ENCODE measurements at regions of chr11 and their contacts with region 1.

Region 1: GRCh38 chr11:17730608-17731462 is 3.7 kb upstream of the KCNC1 start:
- DNase-seq: peak; percentile 75
- ATAC-seq: peak; percentile 91
- H3K4me3 ChIP-seq: no peak overlapping the region
- H3K27ac ChIP-seq: no peak overlapping the region
- H3K4me1 ChIP-seq: peaks cover 0 to 8% of the 10 kb centered on the region in 2 experiments; a peak in 3 of 4 replicates
- H3K27me3 ChIP-seq: no peaks in the 10 kb centered on the region
- CTCF ChIP-seq: peak; percentile 69 to 91 (median 91)
- POLR2A ChIP-seq: no peak
- RAD21 ChIP-seq: peak; percentile 96

Region 2: DNA sequence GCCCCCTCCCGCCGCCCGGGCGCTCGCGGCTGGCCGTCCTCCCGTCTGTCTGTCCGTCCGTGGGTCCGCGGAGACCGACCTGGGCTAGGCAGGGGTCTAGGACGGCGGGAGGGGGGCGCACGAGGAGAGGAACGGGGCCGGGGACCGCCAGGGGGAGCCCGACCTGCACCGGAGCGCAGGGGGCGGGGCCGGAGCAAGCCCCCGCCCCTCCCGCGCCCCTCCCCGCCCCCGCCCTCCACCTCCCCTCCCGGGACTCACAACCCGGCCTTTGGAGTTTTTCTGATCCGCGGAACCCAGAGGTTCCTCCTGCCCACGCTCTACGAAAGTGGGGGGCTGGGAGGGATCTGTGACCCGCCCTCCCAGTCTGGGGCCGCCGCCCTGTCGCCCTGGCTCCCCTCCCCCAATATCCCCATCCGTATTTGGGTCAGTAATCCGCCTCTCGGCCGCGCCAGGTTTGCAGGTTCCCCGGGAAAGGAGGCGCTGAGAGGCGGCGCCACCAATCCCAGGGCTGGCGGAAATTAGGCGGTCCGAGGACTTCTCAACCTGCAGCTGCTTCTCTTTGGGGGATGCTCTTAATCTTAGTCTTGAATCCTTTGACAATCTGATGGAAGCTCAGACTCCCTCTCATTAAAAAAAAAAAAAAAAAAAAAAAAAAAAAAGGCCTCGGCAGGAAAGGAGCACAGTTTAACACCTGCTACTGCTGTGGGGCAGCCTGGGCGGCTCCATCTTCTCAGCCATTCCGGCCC is 341.5 kb before region 1 on chr11:
- CTCF ChIA-PET with region 1: interaction called, 4 read pairs
- POLR2A ChIA-PET with region 1: no interaction called
- RAD21 ChIA-PET with region 1: no interaction called
- intact Hi-C with region 1: loop called (anchors 5 kb)
- DNase-seq: peak; percentile 69
- ATAC-seq: peak; percentile 78
- H3K4me3 ChIP-seq: peak overlapping the region; percentile 58 to 63
- H3K27ac ChIP-seq: peak overlapping the region; percentile 46; the same call in 1 of the 2 replicates
- H3K4me1 ChIP-seq: peaks cover 0 to 19% of the 10 kb centered on the region in 2 experiments; a peak in 3 of 4 replicates
- H3K27me3 ChIP-seq: no peaks in the 10 kb centered on the region
- CTCF ChIP-seq: peak; percentile 35 to 56 (median 50)
- POLR2A ChIP-seq: no peak
- RAD21 ChIP-seq: no peak

Region 3: DNA sequence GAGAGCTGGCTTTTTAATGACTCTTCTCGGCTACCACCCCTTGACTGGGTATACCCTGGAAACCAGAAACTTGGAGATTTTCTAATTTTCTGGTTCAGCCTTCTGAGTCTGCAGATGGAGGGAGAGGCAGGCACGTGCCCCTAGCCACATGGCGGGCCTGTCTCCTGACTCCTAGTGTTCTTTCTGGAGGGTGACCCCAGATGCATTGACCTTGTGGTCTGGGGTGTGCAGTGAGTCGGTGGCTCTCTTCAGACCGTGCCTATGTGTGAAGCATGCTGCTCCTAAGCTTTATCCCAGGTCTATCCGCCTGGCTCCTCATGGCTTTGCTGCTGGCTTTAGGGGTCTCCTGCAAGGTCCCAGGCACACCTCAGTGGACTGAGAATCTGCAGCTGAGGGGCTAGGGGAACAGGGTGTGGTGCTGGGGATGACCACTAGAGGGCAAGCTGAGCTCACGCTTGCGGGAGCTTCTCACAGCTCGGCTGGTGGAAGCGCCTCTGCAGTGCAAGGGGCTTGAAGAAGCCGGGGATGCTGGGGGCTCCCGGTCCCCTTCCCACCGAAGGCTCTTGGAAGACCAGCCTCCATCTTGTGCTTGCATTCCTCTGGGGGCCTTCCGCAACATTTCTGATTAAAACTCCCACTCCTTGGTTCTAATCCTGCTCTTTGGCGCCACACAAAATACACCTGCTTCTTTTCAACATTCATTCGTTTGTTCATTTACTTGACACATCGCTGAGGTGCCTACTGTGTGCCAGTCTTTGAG is 132.0 kb before region 1 on chr11:
- CTCF ChIA-PET with region 1: interaction called, 133 read pairs
- POLR2A ChIA-PET with region 1: no interaction called
- RAD21 ChIA-PET with region 1: interaction called, 22 to 23 read pairs
- intact Hi-C with region 1: loop called (anchors 1 kb)
- DNase-seq: peak; percentile 24
- ATAC-seq: peak; percentile 97
- H3K4me3 ChIP-seq: no peak overlapping the region
- H3K27ac ChIP-seq: no peak overlapping the region
- H3K4me1 ChIP-seq: peaks cover 0 to 7% of the 10 kb centered on the region in 2 experiments; a peak in 2 of 4 replicates
- H3K27me3 ChIP-seq: no peaks in the 10 kb centered on the region
- CTCF ChIP-seq: peak; percentile 89 to 98 (median 95)
- POLR2A ChIP-seq: no peak
- RAD21 ChIP-seq: peak; percentile 94

Region 4: DNA sequence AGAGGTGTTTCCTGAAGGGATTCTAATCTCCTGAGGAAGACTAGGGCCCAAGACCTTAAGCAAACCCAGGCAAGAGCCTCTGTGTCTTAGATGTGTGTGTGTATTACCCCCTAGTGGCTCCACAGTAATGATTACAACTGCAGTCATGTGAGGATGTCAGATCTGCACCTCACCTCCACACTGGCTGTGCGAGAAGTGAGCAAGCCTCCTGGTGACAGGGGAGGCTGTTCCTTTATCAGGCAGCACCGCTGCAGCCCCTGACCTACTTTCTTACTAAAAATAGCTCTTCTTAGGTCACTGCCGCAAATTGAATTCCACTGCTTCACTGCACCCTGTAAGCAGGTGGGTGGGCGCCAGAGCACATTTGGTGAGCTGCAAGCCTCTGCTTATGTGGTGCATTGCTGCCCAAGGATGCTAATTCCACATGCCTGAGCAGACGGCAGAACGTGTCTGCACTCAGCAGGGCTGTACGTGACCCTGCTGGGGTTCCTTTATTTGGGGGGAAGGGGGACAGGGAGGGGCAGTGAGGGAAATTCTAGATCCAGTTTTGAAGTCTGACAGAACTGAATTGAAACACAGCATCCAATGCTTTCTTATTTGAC is 116.1 kb after region 1 on chr11:
- CTCF ChIA-PET with region 1: interaction called, 13 read pairs
- POLR2A ChIA-PET with region 1: no interaction called
- RAD21 ChIA-PET with region 1: no interaction called
- intact Hi-C with region 1: no loop called
- DNase-seq: no peak
- ATAC-seq: peak; percentile 76
- H3K4me3 ChIP-seq: no peak overlapping the region
- H3K27ac ChIP-seq: no peak overlapping the region
- H3K4me1 ChIP-seq: peaks cover 0 to 23% of the 10 kb centered on the region in 2 experiments; a peak in 2 of 4 replicates
- H3K27me3 ChIP-seq: no peaks in the 10 kb centered on the region
- CTCF ChIP-seq: peak; percentile 25 to 40 (median 37); a peak in 4 of 6 replicates
- POLR2A ChIP-seq: no peak
- RAD21 ChIP-seq: peak; percentile 51

Region 5: GRCh38 chr11:17972987-17973386 is 242.2 kb after region 1 on chr11:
- CTCF ChIA-PET with region 1: interaction called, 116 read pairs
- POLR2A ChIA-PET with region 1: no interaction called
- RAD21 ChIA-PET with region 1: interaction called, 13 to 15 read pairs
- intact Hi-C with region 1: loop called (anchors 1 kb)
- DNase-seq: peak; percentile 60
- ATAC-seq: peak; percentile 97
- H3K4me3 ChIP-seq: no peak overlapping the region
- H3K27ac ChIP-seq: no peak overlapping the region
- H3K4me1 ChIP-seq: peaks cover 0 to 7% of the 10 kb centered on the region in 2 experiments; a peak in 1 of 4 replicates
- H3K27me3 ChIP-seq: no peaks in the 10 kb centered on the region
- CTCF ChIP-seq: peak; percentile 57 to 76 (median 64); a peak in 5 of 6 replicates
- POLR2A ChIP-seq: no peak
- RAD21 ChIP-seq: peak; percentile 62

Region 6: DNA sequence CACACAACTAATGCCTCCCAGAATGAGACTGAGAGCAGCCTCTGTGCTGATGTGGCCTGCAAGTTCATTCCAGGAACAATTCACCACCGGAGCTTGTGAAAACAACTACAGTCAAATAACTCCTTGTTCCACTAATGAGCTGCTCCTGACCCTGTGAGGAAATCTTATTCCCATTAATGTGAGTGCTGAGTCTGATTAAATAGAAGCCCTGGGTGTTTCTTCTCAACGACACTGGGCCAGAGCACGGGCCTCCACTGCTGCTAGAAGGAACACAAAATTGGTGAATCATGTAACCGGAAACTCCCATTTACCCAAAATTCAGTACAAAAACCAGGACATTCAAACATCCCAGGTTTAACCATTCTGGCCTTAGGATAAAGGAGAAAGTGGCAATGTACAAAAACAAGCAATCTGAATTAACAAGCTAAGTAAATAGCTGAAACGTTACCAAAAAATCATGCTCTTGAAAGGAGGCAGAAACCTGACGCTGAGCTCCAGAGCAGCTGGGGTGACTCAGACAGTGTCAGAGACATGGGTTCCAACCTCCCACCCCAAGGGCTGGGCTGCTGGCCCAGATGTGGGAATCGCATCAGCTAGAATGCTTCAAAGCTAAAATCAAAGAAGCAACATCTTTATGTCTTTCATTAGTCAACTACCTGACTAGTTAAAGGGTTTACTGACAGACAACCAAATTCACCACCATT is 255.3 kb after region 1 on chr11:
- CTCF ChIA-PET with region 1: interaction called, 24 read pairs
- POLR2A ChIA-PET with region 1: no interaction called
- RAD21 ChIA-PET with region 1: no interaction called
- intact Hi-C with region 1: no loop called
- DNase-seq: peak; percentile 15
- ATAC-seq: peak; percentile 74
- H3K4me3 ChIP-seq: peak overlapping the region in 1 of 2 experiments; percentile 12; a peak in 1 of 4 replicates
- H3K27ac ChIP-seq: peak overlapping the region; percentile 64
- H3K4me1 ChIP-seq: peaks cover 23 to 28% of the 10 kb centered on the region in 2 experiments
- H3K27me3 ChIP-seq: no peaks in the 10 kb centered on the region
- CTCF ChIP-seq: no peak
- POLR2A ChIP-seq: no peak
- RAD21 ChIP-seq: no peak